ENCODE measurements at regions of chr12 and their contacts with region 1.

Region 1: DNA sequence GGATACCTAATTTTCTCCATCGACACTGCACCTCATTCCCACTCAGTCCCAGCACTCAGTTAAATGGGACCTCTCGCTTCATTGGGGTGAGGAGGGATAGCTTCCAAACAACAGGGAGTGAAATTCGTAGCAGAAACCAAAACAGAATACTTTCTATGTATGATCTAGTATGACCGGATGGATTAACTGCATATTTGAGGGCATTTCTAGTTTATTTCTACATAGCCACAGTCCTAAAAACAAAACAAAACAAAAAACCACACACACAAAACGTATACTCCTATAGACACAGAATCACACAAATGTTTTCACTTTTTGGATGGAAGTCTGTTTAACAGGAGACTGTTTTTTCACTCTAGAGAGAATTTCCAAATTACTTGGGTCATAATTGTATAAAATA is 307.5 kb upstream of the FKBP4 start:
- DNase-seq: peak; percentile 16
- H3K4me3 ChIP-seq: no peak overlapping the region
- H3K27ac ChIP-seq: no peak overlapping the region
- H3K27me3 ChIP-seq: no peaks in the 10 kb centered on the region
- CTCF ChIP-seq: no peak

Region 2: DNA sequence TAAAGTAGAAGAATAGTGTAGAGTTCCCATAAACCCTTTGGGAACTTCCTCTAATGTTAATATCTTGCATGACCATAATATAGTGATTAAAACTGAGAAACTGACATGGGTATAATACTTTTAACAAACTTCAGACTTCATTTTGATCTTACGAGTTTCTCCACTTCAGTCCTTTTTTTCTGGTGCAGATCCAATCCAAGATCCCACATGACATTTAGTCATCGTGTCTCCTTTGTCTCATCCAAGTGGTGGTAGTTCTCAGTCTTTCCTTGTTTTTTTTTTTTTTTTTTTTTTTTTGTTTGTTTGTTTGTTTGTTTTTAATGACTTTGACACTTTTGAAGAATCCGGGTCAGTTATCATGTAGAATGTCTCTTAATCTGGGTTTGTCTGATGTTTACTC is 255.3 kb before region 1 on chr12:
- CTCF ChIA-PET with region 1: no interaction called
- POLR2A ChIA-PET with region 1: interaction called, 13 read pairs
- DNase-seq: no peak
- H3K4me3 ChIP-seq: no peak overlapping the region
- H3K27ac ChIP-seq: no peak overlapping the region
- H3K27me3 ChIP-seq: no peaks in the 10 kb centered on the region
- CTCF ChIP-seq: no peak

Region 3: GRCh38 chr12:2526371-2526770 is 39.1 kb after region 1 on chr12:
- CTCF ChIA-PET with region 1: no interaction called
- POLR2A ChIA-PET with region 1: no interaction called
- DNase-seq: no peak
- H3K4me3 ChIP-seq: no peak overlapping the region
- H3K27ac ChIP-seq: no peak overlapping the region
- H3K27me3 ChIP-seq: no peaks in the 10 kb centered on the region
- CTCF ChIP-seq: no peak

Measured in AG04450 (cell line).